ENCODE measurements at regions of chr16 and their contacts with region 1.

Region 1: GRCh38 chr16:50458694-50459495 is 89.3 kb upstream of the NKD1 start:
- DNase-seq: no peak
- H3K4me3 ChIP-seq: no peak overlapping the region
- H3K4me3 Mint-ChIP-seq: no peak overlapping the region
- H3K27ac ChIP-seq: no peak overlapping the region
- H3K27ac Mint-ChIP-seq: peak overlapping the region in 1 of 7 donors; percentile 0
- H3K4me1 ChIP-seq: peaks cover 3% of the 10 kb centered on the region
- H3K4me1 Mint-ChIP-seq: peaks cover 4 to 6% (median 5%) of the 10 kb centered on the region in 4 donors
- H3K27me3 ChIP-seq: no peaks in the 10 kb centered on the region
- H3K27me3 Mint-ChIP-seq: peaks cover 0 to 8% of the 10 kb centered on the region in 2 donors

Region 2: GRCh38 chr16:50102051-50102746 is 356.7 kb before region 1 on chr16:
- CTCF ChIA-PET with region 1: no interaction called
- POLR2A ChIA-PET with region 1: no interaction called
- intact Hi-C with region 1: loop called (anchors 10 kb)
- DNase-seq: no peak
- H3K4me3 ChIP-seq: no peak overlapping the region
- H3K4me3 Mint-ChIP-seq: no peak overlapping the region
- H3K27ac ChIP-seq: no peak overlapping the region
- H3K27ac Mint-ChIP-seq: no peak overlapping the region
- H3K4me1 ChIP-seq: no peaks in the 10 kb centered on the region
- H3K4me1 Mint-ChIP-seq: no peaks in the 10 kb centered on the region
- H3K27me3 ChIP-seq: no peaks in the 10 kb centered on the region
- H3K27me3 Mint-ChIP-seq: no peaks in the 10 kb centered on the region

Region 3: DNA sequence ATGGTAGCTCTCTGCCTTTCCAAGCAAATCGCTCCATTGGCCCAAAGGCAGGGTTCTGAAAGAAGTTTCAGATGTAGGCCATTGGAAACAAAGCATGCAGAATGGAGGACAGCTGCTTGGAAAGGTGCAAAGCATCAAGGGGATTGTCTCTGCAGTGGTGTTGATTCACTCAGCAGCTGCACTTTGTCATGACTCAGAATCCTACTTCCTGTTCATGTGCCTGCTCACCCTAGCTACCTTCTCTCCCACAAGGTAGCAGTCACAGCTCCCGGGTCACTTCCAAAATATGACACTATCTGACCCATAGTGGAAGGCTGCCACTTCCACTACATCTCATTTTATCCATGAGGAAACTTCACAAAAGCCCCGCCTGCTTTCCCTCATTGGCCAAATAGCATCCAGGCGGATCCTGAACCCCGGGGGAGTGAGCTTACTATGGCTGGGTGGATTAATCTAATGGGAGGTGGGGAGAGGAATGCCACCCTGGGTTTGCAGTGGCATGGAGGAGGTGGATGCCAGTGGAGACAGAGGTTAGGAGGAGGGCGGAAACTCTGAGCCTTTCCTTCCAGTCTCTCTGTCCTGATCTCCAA is 14.6 kb after region 1 on chr16:
- CTCF ChIA-PET with region 1: no interaction called
- POLR2A ChIA-PET with region 1: no interaction called
- intact Hi-C with region 1: no loop called
- DNase-seq: no peak
- H3K4me3 ChIP-seq: no peak overlapping the region
- H3K4me3 Mint-ChIP-seq: no peak overlapping the region
- H3K27ac ChIP-seq: no peak overlapping the region
- H3K27ac Mint-ChIP-seq: peak overlapping the region in 1 of 7 donors; percentile 1
- H3K4me1 ChIP-seq: no peaks in the 10 kb centered on the region
- H3K4me1 Mint-ChIP-seq: peaks cover 0 to 5% (median 1%) of the 10 kb centered on the region in 4 donors
- H3K27me3 ChIP-seq: peaks cover 2% of the 10 kb centered on the region
- H3K27me3 Mint-ChIP-seq: peaks cover 9 to 24% of the 10 kb centered on the region in 2 donors

Region 4: DNA sequence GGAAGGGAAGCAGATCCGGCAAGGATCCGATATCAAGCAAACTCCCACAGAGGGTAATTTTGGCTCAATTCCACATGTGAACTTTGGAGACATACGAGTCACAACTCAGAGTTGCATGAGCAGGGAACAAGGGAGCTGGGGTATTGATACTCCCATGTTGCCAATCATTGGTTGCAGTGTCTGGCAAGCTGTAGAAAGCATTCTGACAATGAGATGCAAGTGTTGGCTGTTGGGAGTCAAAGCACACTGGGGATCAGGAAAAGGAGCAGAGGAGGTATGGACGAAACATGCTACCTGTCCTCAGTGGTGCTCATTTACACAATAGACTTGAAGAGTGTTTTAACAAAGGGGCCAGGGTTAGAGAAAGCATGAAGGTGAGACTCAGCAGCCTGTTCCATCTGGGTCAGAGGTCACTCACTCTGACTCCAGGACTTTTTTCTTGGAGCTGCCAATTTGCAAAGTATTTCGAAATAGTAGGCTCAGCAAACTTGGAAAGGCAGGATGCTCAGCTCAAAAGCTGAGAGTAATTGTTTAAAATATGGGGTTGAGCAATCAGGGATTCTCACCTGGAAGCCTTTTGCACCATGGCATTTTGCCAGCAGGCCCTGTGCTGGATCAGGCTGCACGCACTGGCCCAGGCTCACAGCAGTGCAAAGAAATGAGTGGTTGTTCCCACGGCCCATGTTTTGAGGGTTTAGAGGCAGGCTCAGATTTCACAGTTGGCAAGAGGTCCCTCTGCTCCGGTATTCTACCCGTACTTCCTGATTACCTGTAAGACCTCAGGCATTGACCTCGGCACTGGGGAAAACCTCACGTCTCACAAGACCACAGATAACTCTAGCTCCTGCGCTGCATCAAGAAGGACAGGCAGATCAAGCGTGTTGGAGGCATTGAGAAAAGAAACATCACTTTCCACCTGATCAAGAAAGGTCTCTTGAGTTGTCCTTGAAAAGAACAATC is 71.7 kb after region 1 on chr16:
- CTCF ChIA-PET with region 1: no interaction called
- POLR2A ChIA-PET with region 1: no interaction called
- intact Hi-C with region 1: no loop called
- DNase-seq: no peak
- H3K4me3 ChIP-seq: no peak overlapping the region
- H3K4me3 Mint-ChIP-seq: no peak overlapping the region
- H3K27ac ChIP-seq: no peak overlapping the region
- H3K27ac Mint-ChIP-seq: no peak overlapping the region
- H3K4me1 ChIP-seq: no peaks in the 10 kb centered on the region
- H3K4me1 Mint-ChIP-seq: no peaks in the 10 kb centered on the region
- H3K27me3 ChIP-seq: no peaks in the 10 kb centered on the region
- H3K27me3 Mint-ChIP-seq: peaks cover 2 to 7% of the 10 kb centered on the region in 2 donors